PC-9 (cell line): ENCODE measurements at regions of chr11 and their contacts with region 1.

Region 1: DNA sequence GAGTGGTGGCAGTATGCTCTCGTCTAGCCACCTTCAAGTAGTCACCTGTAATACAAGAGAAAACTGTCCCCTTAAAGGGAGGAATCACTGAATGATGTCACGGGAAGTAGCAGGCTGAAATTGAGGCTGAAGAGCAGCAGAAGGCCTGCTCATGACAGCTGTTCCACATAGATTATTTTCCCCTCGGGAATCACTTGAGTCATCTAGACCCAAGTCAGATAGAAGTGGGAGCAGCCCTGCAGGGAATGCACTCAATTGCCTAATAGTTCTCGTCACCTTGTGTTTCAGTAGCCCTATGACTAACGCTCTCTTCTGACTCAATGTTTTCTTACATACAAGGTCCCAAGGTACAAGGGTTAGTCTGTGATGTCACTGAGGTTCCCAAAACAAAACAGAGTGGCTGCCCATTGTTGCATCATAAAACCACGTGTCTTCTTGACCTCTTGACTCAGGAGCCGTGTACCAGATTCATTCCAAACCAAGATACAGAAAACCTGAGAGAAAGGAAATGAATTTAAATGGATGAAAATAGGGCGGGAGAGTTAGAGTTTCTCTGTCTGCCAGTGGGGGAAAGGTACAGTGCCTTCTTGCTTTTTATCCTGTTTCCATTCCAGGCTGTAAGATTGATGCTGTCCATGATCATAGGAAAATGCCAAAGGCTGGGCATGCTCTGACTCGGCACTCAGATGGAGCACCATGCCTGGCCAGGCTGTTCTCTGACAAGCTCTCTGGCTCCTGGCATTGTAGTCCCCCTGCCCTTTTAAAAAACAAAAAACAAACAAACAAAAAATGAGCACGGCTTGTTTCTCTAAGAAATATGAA is 21.6 kb upstream of the C11orf96 start:
- DNase-seq: peak; percentile 65 to 100
- H3K4me3 ChIP-seq: no peak overlapping the region
- H3K27ac ChIP-seq: peak overlapping the region; percentile 75
- H3K4me1 ChIP-seq: peaks cover 22% of the 10 kb centered on the region
- H3K27me3 ChIP-seq: no peaks in the 10 kb centered on the region
- CTCF ChIP-seq: no peak

Region 2: DNA sequence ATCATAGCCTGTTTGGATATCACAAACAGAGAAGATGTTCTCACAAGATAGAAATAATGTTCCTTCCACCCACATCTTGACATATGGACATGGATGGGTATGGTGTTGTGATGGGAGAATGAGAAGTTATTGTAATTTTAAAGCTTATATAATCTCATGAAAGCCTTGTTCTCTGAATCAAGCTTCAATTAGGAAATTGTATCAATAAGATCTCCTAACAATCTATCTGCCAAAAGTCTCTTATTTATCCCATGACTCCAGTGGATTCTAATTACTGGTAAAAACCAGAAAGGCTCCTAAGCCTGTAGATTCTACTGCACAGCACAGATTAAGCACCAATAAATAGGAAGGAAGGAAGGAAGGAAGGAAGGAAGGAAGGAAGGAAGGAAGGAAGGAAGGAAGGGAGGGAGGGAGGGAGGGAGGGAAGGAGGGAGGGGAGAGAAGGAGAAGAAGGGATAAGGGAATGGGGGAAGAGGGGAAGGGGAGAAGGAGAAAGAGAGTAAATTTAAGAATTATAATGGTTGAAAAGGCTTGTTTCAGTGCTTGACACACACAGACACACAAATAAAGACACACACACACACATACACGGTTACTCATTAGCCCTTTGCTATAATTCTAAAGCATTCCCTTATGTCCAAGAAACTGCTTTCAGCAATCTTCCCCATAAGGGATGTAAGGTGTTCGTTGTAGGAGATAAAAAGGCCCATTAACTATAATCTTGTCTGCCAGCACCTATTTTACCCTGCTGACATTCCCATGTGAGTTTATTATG is 867.0 kb before region 1 on chr11:
- CTCF ChIA-PET with region 1: no interaction called
- POLR2A ChIA-PET with region 1: no interaction called
- intact Hi-C with region 1: no loop called
- DNase-seq: no peak
- H3K4me3 ChIP-seq: no peak overlapping the region
- H3K27ac ChIP-seq: no peak overlapping the region
- H3K4me1 ChIP-seq: no peaks in the 10 kb centered on the region
- H3K27me3 ChIP-seq: 0 out of 2 replicates have a peak, but pooled peaks cover 7% of the 10 kb centered on the region
- CTCF ChIP-seq: no peak

Region 3: GRCh38 chr11:43723617-43724016 is 197.2 kb before region 1 on chr11:
- CTCF ChIA-PET with region 1: no interaction called
- POLR2A ChIA-PET with region 1: no interaction called
- intact Hi-C with region 1: no loop called
- DNase-seq: no peak
- H3K4me3 ChIP-seq: no peak overlapping the region
- H3K27ac ChIP-seq: no peak overlapping the region
- H3K4me1 ChIP-seq: no peaks in the 10 kb centered on the region
- H3K27me3 ChIP-seq: no peaks in the 10 kb centered on the region
- CTCF ChIP-seq: no peak

Region 4: GRCh38 chr11:43962383-43963278 is 41.8 kb after region 1 on chr11:
- CTCF ChIA-PET with region 1: no interaction called
- POLR2A ChIA-PET with region 1: no interaction called
- intact Hi-C with region 1: no loop called
- DNase-seq: no peak
- H3K4me3 ChIP-seq: no peak overlapping the region
- H3K27ac ChIP-seq: no peak overlapping the region
- H3K4me1 ChIP-seq: no peaks in the 10 kb centered on the region
- H3K27me3 ChIP-seq: peaks cover 93% of the 10 kb centered on the region
- CTCF ChIP-seq: no peak

Region 5: DNA sequence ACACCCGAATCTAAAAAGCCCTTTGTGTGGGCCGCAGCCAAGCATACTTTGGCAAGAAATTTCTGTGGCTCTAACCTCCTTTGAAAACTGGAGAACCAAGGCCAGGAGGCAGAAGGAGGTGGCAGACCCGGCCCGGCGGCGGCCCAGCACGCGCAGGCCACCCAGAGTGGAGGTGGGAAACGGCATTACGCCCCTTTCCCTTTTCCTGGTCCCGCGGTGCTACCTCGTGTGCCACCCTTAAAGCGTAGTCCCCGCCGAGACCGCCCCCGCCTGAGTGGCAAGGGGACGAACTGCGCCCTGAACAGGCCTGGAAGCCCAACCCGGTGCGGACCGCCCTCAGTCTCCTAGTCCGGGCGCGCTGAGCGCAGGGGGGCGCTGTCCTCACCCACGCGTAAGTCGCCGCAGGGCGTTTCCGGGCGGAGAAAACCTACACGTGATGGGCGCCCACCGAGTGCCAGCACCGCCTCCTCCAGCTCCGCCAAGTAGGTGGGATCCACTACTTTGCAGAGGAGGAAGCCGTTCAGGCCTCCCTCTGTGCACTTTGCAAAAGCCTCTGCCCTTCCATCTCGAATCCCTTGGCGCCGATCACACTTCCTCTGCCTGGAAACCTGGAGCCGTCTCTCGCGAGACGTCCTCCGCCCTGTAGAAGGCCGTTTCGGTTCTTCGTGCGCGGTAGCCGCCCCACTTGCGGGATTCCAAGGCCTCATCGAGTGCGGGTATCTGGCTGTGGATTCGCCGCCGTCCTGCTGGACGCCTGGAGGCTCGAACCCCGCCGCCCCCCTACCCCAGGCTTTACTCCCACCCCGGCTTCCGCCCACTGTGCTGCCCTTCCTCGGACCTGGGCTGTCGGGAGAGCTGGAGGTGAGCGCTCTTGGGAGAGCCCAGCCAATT is 145.3 kb after region 1 on chr11 and contains the start of gene ACCS:
- CTCF ChIA-PET with region 1: no interaction called
- POLR2A ChIA-PET with region 1: no interaction called
- intact Hi-C with region 1: loop called (anchors 2 kb)
- DNase-seq: peak; percentile 78 to 95
- H3K4me3 ChIP-seq: peak within 1 kb of the TSS; percentile 72
- H3K27ac ChIP-seq: peak within 1 kb of the TSS; percentile 63
- H3K4me1 ChIP-seq: peaks cover 10% of the 10 kb centered on the region; the same call in 1 of the 2 replicates
- H3K27me3 ChIP-seq: no peaks in the 10 kb centered on the region; the same call in 1 of the 2 replicates
- CTCF ChIP-seq: peak; percentile 79
- total RNA-seq, gene ACCS: 44.6 and 48.9 TPM in 2 replicates

Region 6: GRCh38 chr11:44565211-44565952 is 644.6 kb after region 1 on chr11 and contains the start of gene CD82:
- CTCF ChIA-PET with region 1: no interaction called
- POLR2A ChIA-PET with region 1: no interaction called
- intact Hi-C with region 1: loop called (anchors 10 kb)
- DNase-seq: peak; percentile 93 to 100
- H3K4me3 ChIP-seq: peak within 1 kb of the TSS; percentile 58
- H3K27ac ChIP-seq: peak within 1 kb of the TSS; percentile 75
- H3K4me1 ChIP-seq: peaks cover 14% of the 10 kb centered on the region
- H3K27me3 ChIP-seq: no peaks in the 10 kb centered on the region
- CTCF ChIP-seq: peak; percentile 46; the same call in 1 of the 2 replicates
- total RNA-seq, gene CD82: 30.7 and 46.0 TPM in 2 replicates